ENCODE measurements at regions of chr4 and their contacts with region 1.

Region 1: DNA sequence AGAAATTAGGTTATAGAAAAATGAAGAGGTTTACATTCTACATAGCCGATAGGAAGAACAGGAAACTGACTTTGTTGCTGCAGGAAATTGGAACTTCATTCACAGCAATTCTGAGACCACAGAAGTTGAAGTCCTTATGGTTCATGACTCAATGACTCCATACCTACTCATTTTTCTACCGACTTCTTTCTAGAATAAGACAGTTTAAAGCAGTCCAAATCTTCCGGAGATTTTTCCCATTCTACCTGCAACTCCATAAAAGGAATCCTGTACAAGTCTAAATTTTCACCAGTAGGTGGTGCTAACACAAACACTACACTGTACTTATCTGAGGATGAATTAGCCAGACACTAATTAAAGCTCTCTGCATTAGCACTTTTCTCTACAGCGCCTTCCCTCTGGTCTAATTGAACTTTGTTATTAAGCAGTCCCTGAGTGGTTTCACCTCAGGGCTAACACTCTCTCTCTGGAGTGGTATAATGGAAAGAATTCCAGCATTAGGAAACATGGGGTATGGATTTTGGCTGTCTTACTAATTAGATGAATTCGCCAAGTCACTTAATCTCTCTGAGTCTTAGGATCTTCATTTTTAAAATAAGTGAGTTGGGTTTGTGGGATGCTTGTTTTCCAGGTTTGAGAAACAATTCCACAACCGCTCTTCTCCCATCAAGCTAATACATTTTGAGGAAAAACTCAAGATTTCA is 167.9 kb downstream of the SMIM20 start:
- DNase-seq: peak; percentile 29
- CTCF ChIP-seq: peak; percentile 40

Region 2: GRCh38 chr4:26069218-26069617 is 12.7 kb before region 1 on chr4:
- CTCF ChIA-PET with region 1: interaction called, 27 read pairs
- POLR2A ChIA-PET with region 1: no interaction called
- DNase-seq: peak; percentile 45
- CTCF ChIP-seq: peak; percentile 55

Region 3: DNA sequence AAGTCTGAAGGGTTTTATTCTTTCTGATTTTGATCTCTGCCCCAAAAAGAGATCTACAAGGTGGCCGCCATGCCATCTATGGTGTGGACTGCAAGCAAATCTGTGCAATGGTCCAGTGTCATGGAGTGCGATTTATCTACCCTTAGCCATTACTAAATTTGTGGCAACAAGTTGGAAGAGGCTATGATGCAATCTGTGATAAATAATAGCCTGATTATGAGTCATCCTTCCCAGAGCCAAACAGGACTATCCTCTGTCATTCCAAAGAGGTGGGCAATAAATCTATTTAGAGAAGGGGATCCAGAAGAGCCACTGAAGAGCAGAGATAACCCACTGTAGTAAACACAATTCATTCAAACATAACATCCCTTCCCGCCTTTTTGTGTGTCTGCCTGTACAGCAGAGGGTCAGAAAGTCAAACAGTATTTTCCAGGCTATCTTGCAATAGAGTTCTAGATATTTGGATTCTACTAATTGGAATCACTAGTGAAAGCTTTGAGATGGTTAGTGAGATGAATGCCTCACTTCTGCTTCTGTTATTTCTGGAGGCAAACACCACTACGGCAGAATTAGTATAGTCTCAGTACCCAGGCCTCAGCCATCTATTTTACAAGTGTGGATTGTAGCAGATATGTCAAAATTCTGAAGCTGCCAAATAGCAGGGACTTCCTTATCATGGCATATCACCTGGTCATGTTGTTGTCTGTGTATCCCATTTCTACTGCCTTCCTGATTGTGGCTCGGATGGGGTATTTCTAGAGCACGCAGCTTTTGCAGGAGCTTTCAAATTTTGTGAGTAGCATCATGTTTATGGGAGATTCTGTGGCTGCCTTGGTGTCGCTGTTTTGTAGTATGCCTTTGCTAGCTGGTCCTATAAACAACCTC is 24.1 kb after region 1 on chr4:
- CTCF ChIA-PET with region 1: interaction called, 26 read pairs
- POLR2A ChIA-PET with region 1: no interaction called
- DNase-seq: no peak
- CTCF ChIP-seq: no peak

Region 4: GRCh38 chr4:26161030-26161824 is 79.3 kb after region 1 on chr4:
- CTCF ChIA-PET with region 1: interaction called, 10 read pairs
- POLR2A ChIA-PET with region 1: no interaction called
- DNase-seq: no peak
- CTCF ChIP-seq: peak; percentile 28